H1 (cell line): ENCODE measurements at regions of chr13 and their contacts with region 1.

Region 1: GRCh38 chr13:39602614-39603366 is at the start of gene LHFPL6:
- DNase-seq: peak; percentile 46 to 85
- H3K4me3 ChIP-seq: peak within 1 kb of the TSS; percentile 42 to 88 (median 78)
- H3K27ac ChIP-seq: no peak within 1 kb of the TSS
- H3K4me1 ChIP-seq: peaks cover 0 to 6% (median 2%) of the 10 kb centered on the region in 4 experiments; a peak in 2 of 7 replicates
- H3K27me3 ChIP-seq: peaks cover 0 to 8% (median 4%) of the 10 kb centered on the region in 4 experiments; a peak in 2 of 7 replicates
- CTCF ChIP-seq: peak; percentile 50 to 60 (median 58)
- EP300 ChIP-seq: no peak
- POLR2A ChIP-seq: no peak
- RAD21 ChIP-seq: peak; percentile 79 to 82
- total RNA-seq, gene LHFPL6: 15.5 and 17.0 TPM in 2 replicates

Region 2: GRCh38 chr13:39415008-39415802 is 187.6 kb before region 1 on chr13:
- CTCF ChIA-PET with region 1: interaction called, 29 read pairs
- POLR2A ChIA-PET with region 1: interaction called, 4 read pairs
- DNase-seq: no peak
- H3K4me3 ChIP-seq: no peak overlapping the region
- H3K27ac ChIP-seq: no peak overlapping the region
- H3K4me1 ChIP-seq: peaks cover 3 to 26% (median 19%) of the 10 kb centered on the region in 4 experiments; a peak in 6 of 7 replicates
- H3K27me3 ChIP-seq: no peaks in the 10 kb centered on the region
- CTCF ChIP-seq: peak; percentile 67 to 74 (median 72)
- EP300 ChIP-seq: no peak
- POLR2A ChIP-seq: no peak
- RAD21 ChIP-seq: peak; percentile 74 to 87

Region 3: DNA sequence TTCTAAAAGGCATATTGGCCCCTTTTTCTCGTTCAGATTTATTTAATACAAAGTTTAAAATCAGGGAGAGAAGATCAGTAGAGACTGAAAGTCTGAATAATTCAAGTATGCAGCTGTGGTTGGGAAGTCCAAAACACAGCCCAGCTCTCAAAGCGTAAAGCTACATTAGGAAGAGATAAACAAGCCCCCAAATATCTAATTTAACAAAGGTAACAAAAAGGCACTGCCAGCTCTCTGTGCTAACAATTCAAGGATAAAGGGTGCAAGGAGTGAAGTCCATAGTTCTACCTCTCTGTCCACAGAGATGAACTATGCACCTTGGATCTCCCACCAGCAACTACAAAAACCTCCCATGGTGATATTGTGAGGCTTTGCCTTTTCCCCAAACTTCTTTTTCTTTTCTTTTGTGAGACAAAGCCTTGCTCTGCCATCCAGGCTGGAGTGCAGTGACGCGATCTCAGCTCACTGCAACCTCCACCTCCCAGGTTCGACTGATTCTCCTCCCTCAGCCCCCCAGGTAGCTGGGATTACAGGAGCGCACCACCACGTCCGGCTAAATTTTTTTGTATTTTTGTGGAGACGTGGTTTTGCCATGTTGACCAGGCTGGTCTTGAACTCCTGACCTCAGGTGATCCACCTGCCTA is 104.2 kb before region 1 on chr13:
- CTCF ChIA-PET with region 1: interaction called, 10 read pairs
- POLR2A ChIA-PET with region 1: no interaction called
- DNase-seq: no peak
- H3K4me3 ChIP-seq: peak overlapping the region in 1 of 4 experiments; percentile 34; a peak in 1 of 8 replicates
- H3K27ac ChIP-seq: no peak overlapping the region
- H3K4me1 ChIP-seq: peaks cover 11 to 43% (median 25%) of the 10 kb centered on the region in 4 experiments; a peak in 6 of 7 replicates
- H3K27me3 ChIP-seq: no peaks in the 10 kb centered on the region
- CTCF ChIP-seq: no peak
- EP300 ChIP-seq: peak in 1 of 2 experiments; percentile 45; a peak in 1 of 3 replicates
- POLR2A ChIP-seq: no peak
- RAD21 ChIP-seq: peak in 1 of 2 experiments; percentile 0; a peak in 1 of 4 replicates